ENCODE measurements at regions of chr11 and their contacts with region 1.

Region 1: DNA sequence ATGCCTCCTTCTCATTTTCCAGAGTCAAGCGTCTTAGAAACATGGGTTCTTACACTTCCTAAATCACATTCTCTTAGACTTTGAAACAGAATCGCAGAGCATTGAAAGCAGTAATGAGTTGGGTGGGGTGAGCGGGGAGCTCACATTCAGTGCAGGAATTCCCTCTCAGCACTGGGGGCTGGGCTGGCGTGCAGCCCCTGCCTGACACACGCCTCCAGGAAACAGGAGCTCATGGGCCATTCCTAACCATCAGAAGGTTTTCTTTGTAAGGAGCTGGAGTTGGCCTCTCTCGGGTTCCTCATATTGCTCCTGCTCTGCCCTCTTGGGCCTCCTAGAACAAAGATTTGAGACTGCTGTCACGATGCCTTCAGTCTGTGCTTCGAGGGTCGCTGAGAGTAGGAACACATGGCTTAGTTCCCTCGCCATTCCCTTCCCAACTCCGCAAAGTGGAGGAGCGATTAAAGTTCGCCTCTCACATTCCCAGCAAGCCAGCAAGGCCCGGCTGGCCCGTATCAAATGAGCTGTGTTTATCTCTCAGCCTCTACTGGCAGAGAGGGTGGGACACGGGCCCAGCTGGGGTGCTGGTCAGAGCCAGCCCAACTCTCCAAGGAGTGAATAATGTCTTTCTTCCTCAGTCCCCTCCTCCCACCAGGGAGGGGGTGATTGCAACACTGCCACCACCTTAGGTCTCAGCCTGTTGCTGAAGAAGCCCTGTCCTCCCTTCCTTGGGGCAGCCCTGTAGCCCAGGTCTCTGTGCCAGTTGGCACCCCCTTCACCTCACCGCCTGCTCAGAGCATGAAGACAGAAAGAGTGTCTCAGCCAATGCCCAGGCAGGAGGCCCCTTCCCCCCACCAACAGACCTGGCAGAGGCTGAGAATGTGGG is 10.4 kb downstream of the CHRDL2 start:
- DNase-seq: peak; percentile 58 to 77
- ATAC-seq: peak; percentile 57 to 88 (median 80)
- H3K4me3 ChIP-seq: no peak overlapping the region
- H3K27ac ChIP-seq: peak overlapping the region; percentile 33 to 78 (median 68)
- H3K4me1 ChIP-seq: peaks cover 8 to 42% (median 23%) of the 10 kb centered on the region in 9 donors
- H3K27me3 ChIP-seq: no peaks in the 10 kb centered on the region
- CTCF ChIP-seq: no peak

Region 2: DNA sequence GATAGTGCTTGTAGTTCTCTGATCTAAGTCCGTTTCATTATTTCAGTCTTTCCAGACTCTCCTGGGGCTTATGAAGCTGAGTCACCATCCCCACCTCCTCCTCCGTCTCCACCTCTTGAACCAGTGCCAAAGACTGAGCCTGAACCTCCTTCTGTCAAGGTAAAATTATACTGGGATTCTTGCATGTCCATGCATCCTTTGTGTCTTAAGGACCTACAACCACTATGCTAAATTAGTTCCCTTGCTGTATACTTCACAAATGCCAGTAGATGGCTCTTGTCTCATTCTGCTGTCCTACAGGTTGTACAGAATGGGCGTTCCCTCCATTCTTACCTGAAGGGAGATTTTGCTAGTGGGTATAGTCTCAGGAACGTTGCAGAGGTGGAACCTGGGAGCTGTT is 86.3 kb before region 1 on chr11:
- intact Hi-C with region 1: loop called in 9 of 10 experiments (anchors 1 to 5 kb)
- DNase-seq: no peak
- ATAC-seq: peak in 3 of 8 donors; percentile 47 to 81 (median 62)
- H3K4me3 ChIP-seq: no peak overlapping the region
- H3K27ac ChIP-seq: no peak overlapping the region
- H3K4me1 ChIP-seq: peaks cover 0 to 17% (median 0%) of the 10 kb centered on the region in 9 donors
- H3K27me3 ChIP-seq: no peaks in the 10 kb centered on the region
- CTCF ChIP-seq: peak in 7 of 9 donors; percentile 34 to 57 (median 40)